Transverse colon (tissue), 4 donors: ENCODE measurements at regions of chr3 and their contacts with region 1.

Region 1: DNA sequence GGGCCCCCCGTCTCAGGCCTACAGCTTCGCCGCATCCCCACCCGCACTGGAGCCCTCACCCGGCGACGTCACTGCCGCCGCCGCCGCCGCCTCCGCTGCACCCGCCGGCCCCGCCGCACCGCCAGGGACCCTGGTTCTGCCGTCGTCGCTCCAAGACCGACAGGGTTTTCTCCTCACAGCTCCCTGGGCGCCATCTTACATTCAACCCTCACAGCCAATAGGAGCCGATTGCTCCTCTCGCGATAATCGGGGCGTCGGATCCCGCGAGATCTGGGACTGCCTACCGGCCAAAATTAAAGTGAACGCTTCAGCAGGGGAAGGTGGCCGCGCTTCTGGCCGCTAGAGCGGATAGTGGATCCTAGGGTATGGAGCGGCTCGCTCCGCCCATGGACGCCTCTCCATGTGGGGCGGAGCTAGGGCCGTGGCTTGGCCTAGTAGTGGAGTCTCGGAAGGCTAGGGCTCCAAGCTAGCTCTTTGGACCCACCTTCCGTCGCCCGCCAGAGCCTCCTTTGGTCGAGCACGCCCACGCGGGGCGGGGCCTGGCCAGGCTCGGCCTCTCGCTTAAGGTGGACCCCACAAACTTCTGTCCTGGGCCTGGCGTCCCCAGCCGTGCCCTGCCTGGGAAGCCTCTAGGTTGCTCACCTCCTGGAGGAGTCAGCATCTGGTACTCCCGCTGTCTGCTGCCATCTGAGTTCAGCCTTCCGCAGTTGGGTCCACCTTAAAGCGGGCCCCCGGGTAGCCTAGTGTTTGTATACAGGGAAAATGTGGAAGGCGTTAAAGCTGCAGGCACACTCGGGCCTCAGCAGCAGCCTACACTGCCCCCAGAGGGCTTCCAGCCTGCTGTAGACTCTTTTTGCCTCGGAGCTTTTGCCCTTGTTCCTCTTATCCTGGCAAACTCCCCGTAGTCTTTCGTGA is at the start of gene QRICH1:
- DNase-seq: peak; percentile 97
- H3K4me3 ChIP-seq: peak within 1 kb of the TSS; percentile 69 to 100 (median 84)
- H3K27ac ChIP-seq: peak within 1 kb of the TSS; percentile 90 to 99 (median 98)
- H3K4me1 ChIP-seq: peaks cover 21 to 49% (median 30%) of the 10 kb centered on the region in 4 donors
- H3K27me3 ChIP-seq: no peaks in the 10 kb centered on the region
- CTCF ChIP-seq: peak; percentile 46 to 61 (median 50)
- EP300 ChIP-seq: no peak
- POLR2A ChIP-seq: peak; percentile 76
- total RNA-seq, gene QRICH1: 76.4 to 122 (median 84.7) TPM

Region 2: GRCh38 chr3:49133226-49133951 is 39.3 kb after region 1 on chr3:
- in situ Hi-C with region 1: no loop called
- intact Hi-C with region 1: loop called (anchors 5 kb)
- DNase-seq: peak; percentile 88
- H3K4me3 ChIP-seq: peak overlapping the region; percentile 51 to 61 (median 52)
- H3K27ac ChIP-seq: peak overlapping the region; percentile 84 to 93 (median 88)
- H3K4me1 ChIP-seq: peaks cover 9 to 38% (median 21%) of the 10 kb centered on the region in 4 donors
- H3K27me3 ChIP-seq: no peaks in the 10 kb centered on the region
- CTCF ChIP-seq: no peak
- EP300 ChIP-seq: no peak
- POLR2A ChIP-seq: no peak

Region 3: DNA sequence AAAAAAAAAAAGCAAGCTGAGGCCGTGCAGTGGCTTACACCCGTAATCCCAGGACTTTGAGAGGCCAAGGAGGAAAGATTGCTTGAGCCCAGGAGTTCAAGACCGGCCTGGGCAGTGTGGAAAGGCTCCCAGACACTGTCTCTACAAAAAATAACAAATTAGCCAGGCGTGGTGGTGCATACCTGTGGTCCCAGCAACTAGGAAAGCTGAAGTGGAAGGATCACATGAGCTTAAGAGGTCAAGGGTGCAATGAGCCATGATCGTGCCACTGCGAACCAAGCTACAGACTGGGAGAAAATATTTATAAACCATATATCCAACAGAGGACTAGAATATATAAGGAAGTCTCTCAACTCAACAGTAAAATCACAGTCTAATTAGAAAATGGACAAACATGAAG is 87.2 kb after region 1 on chr3:
- in situ Hi-C with region 1: no loop called
- intact Hi-C with region 1: no loop called
- DNase-seq: no peak
- H3K4me3 ChIP-seq: no peak overlapping the region
- H3K27ac ChIP-seq: no peak overlapping the region
- H3K4me1 ChIP-seq: no peaks in the 10 kb centered on the region
- H3K27me3 ChIP-seq: no peaks in the 10 kb centered on the region
- CTCF ChIP-seq: no peak
- EP300 ChIP-seq: no peak
- POLR2A ChIP-seq: no peak